ENCODE measurements at regions of chr16 and their contacts with region 1.

Region 1: GRCh38 chr16:85491058-85491771 is 121.9 kb upstream of the GSE1 start:
- DNase-seq: peak; percentile 31
- ATAC-seq: peak; percentile 77
- H3K4me3 ChIP-seq: peak overlapping the region in 1 of 2 experiments; percentile 47; a peak in 2 of 4 replicates
- H3K27ac ChIP-seq: peak overlapping the region; percentile 32; the same call in 1 of the 2 replicates
- H3K4me1 ChIP-seq: peaks cover 22 to 25% of the 10 kb centered on the region in 2 experiments
- H3K27me3 ChIP-seq: no peaks in the 10 kb centered on the region
- CTCF ChIP-seq: peak; percentile 93 to 100 (median 100)
- POLR2A ChIP-seq: no peak
- RAD21 ChIP-seq: peak; percentile 80

Region 2: GRCh38 chr16:85437166-85438055 is 53.8 kb before region 1 on chr16:
- CTCF ChIA-PET with region 1: no interaction called
- POLR2A ChIA-PET with region 1: no interaction called
- RAD21 ChIA-PET with region 1: no interaction called
- intact Hi-C with region 1: loop called (anchors 10 kb)
- DNase-seq: no peak
- ATAC-seq: no peak
- H3K4me3 ChIP-seq: no peak overlapping the region
- H3K27ac ChIP-seq: no peak overlapping the region
- H3K4me1 ChIP-seq: no peaks in the 10 kb centered on the region
- H3K27me3 ChIP-seq: no peaks in the 10 kb centered on the region
- CTCF ChIP-seq: no peak
- POLR2A ChIP-seq: no peak
- RAD21 ChIP-seq: no peak

Region 3: GRCh38 chr16:85473909-85474620 is 17.1 kb before region 1 on chr16:
- CTCF ChIA-PET with region 1: interaction called, 30 read pairs
- POLR2A ChIA-PET with region 1: no interaction called
- RAD21 ChIA-PET with region 1: no interaction called
- intact Hi-C with region 1: no loop called
- DNase-seq: no peak
- ATAC-seq: no peak
- H3K4me3 ChIP-seq: no peak overlapping the region
- H3K27ac ChIP-seq: no peak overlapping the region
- H3K4me1 ChIP-seq: peaks cover 15 to 17% of the 10 kb centered on the region in 2 experiments
- H3K27me3 ChIP-seq: no peaks in the 10 kb centered on the region
- CTCF ChIP-seq: no peak
- POLR2A ChIP-seq: no peak
- RAD21 ChIP-seq: no peak

Region 4: GRCh38 chr16:85502357-85502756 is 11.1 kb after region 1 on chr16:
- CTCF ChIA-PET with region 1: interaction called, 13 read pairs
- POLR2A ChIA-PET with region 1: interaction called, 3 read pairs
- RAD21 ChIA-PET with region 1: no interaction called
- intact Hi-C with region 1: no loop called
- DNase-seq: no peak
- ATAC-seq: no peak
- H3K4me3 ChIP-seq: no peak overlapping the region
- H3K27ac ChIP-seq: no peak overlapping the region
- H3K4me1 ChIP-seq: no peaks in the 10 kb centered on the region
- H3K27me3 ChIP-seq: no peaks in the 10 kb centered on the region
- CTCF ChIP-seq: no peak
- POLR2A ChIP-seq: no peak
- RAD21 ChIP-seq: no peak

Region 5: DNA sequence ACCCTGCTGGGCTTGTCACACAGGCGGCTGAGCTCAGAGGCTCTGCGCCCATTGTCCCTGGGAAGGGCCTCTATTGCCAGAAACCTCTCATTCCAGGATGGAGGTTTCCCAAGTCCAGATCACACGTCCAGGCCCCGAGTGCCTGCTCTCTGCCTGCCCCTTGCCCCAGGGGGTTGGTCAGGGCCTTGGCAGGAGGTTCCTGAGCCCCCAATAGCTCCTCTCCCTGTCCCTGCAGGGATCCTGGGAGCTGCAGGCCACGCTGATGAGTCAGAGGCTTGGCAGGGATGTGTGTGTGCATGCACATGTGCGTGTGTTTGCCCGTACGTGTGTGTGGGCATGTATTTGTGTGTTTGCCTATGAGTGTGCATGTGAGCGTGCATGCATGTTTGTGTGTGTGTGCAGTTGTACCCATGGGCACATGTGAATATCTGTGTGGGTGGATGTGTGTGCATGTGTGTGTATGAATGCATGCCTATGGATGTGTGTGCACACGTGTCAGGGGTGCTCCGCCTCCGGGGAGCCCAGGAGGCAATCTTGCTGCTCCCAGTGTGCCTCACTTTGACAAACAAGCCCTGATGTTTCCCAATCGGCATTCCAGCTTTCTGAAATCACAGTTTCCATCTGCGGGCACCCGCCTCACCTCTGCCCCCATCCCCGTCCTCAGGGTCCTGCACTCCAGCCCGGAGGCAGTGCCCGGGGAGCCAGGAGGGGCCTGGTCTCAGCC is 23.5 kb after region 1 on chr16:
- CTCF ChIA-PET with region 1: interaction called, 33 read pairs
- POLR2A ChIA-PET with region 1: no interaction called
- RAD21 ChIA-PET with region 1: interaction called in 1 of 2 experiments, 10 read pairs
- intact Hi-C with region 1: no loop called
- DNase-seq: peak; percentile 81
- ATAC-seq: peak; percentile 82
- H3K4me3 ChIP-seq: peak overlapping the region; percentile 17 to 50
- H3K27ac ChIP-seq: peak overlapping the region; percentile 81
- H3K4me1 ChIP-seq: peaks cover 34 to 39% of the 10 kb centered on the region in 2 experiments
- H3K27me3 ChIP-seq: no peaks in the 10 kb centered on the region
- CTCF ChIP-seq: no peak
- POLR2A ChIP-seq: no peak
- RAD21 ChIP-seq: no peak

Region 6: DNA sequence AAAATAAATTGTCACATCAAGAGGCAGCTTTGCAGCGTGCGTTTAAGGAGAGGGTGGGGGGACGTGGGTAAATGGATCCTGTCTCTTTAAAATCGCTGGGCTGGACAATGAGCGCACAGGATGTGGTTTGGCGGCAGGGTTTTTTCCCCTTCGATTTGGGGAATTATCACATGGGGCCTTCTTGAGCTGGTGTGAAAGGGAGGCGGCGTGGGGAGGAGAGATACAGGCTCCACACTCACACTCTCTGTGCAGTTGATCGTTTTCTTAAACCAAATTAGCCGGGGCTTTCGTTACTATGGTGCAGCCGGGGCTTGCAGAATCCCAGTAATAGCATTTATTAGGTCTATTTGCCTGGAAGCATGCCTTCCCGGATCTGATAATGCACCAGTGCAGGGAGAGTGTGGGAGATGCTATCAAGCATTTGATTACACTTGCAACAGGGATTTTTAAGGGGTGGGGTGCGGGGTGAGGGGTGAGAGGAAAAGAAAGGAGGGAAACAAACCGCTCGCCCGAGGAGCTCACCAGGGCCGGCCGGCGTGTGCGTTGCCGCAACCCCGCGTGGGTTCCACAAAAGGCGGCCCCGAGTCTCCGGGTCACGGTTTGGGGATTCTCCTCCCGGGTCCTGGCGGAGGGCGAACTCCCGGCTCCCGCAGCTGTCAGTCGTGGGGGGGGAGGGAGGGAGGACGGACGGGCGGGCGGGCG is 63.0 kb after region 1 on chr16:
- CTCF ChIA-PET with region 1: interaction called, 31 read pairs
- POLR2A ChIA-PET with region 1: no interaction called
- RAD21 ChIA-PET with region 1: interaction called, 3 to 13 read pairs
- intact Hi-C with region 1: no loop called
- DNase-seq: peak; percentile 80
- ATAC-seq: peak; percentile 56
- H3K4me3 ChIP-seq: peak overlapping the region; percentile 75 to 83
- H3K27ac ChIP-seq: peak overlapping the region; percentile 64
- H3K4me1 ChIP-seq: peaks cover 54 to 68% of the 10 kb centered on the region in 2 experiments
- H3K27me3 ChIP-seq: no peaks in the 10 kb centered on the region
- CTCF ChIP-seq: no peak
- POLR2A ChIP-seq: peak; percentile 42
- RAD21 ChIP-seq: no peak

Region 7: DNA sequence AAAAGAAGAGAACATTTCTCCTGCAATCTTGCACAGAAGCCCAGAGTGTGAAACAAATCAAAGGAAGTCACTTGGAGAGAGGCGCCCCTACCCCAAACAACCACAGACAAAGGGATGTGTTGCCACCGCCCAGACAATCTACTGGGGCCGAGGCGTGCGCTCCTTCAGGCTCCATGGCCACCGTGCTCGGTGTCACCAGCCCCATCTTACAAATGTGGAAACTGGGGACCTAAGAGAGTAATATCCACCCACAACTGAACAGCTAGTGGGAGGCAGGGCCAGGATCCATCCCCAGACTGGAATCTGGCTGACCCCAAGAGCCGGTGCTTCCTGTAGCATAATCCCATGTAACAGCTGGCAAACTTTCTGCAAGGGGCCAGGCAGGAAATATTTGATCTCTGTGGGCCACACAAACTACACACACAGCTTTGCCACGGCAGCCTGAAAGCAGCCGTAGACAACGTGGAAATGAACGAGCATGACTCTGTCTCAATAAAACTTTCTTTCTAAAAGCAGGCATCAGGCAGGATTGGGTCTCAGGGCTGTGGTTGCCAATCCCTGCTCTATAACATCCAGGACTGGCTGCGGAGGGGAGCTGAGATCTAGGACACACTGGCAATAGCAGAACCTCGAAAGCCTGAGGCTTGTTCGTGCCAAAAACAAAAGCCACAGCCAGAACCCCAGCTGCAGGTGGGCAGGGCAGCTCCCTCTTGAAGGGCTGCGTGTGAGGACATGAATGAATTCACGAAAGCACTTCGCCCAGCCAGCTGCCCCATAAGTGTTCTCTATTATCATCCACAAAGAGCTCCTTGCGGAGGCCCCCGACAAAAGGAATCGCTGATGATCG is 224.2 kb after region 1 on chr16:
- CTCF ChIA-PET with region 1: no interaction called
- POLR2A ChIA-PET with region 1: no interaction called
- RAD21 ChIA-PET with region 1: no interaction called
- intact Hi-C with region 1: no loop called
- DNase-seq: no peak
- ATAC-seq: no peak
- H3K4me3 ChIP-seq: no peak overlapping the region
- H3K27ac ChIP-seq: no peak overlapping the region
- H3K4me1 ChIP-seq: peaks cover 8 to 15% of the 10 kb centered on the region in 2 experiments
- H3K27me3 ChIP-seq: no peaks in the 10 kb centered on the region
- CTCF ChIP-seq: no peak
- POLR2A ChIP-seq: no peak
- RAD21 ChIP-seq: no peak

Measured in HCT116 (cell line).